CD8-positive, alpha-beta T cell (primary cell): ENCODE measurements at regions of chr1 and their contacts with region 1.

Region 1: GRCh38 chr1:174775614-174776013 is 224.1 kb upstream of the CACYBP start:
- DNase-seq: no peak
- ATAC-seq: no peak
- H3K4me3 ChIP-seq: no peak overlapping the region
- H3K4me3 Mint-ChIP-seq: no peak overlapping the region
- H3K27ac ChIP-seq: no peak overlapping the region
- H3K27ac Mint-ChIP-seq: no peak overlapping the region
- H3K4me1 ChIP-seq: no peaks in the 10 kb centered on the region
- H3K4me1 Mint-ChIP-seq: peaks cover 8% of the 10 kb centered on the region
- H3K27me3 ChIP-seq: no peaks in the 10 kb centered on the region
- H3K27me3 Mint-ChIP-seq: no peaks in the 10 kb centered on the region
- CTCF ChIP-seq: no peak

Region 2: DNA sequence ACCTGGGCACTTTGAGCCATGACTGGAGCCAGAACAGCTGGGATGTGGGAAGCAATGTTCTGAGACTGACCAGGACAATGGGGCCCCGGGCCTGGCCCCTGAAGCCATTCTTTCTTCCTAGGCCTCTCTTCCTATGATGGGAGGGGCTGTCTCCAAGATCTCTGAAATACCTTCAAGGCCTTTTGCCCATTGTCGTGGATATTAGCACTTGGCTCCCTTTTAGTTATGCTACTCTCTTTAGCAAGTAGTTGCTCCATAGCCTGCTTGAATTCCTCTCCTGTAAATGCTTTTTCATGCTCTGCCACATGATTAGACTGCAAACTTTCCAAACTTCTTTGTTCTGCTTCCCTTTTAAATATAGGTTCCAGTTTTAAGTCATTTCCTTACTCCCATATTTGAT is 38.8 kb before region 1 on chr1:
- CTCF ChIA-PET with region 1: no interaction called
- POLR2A ChIA-PET with region 1: no interaction called
- intact Hi-C with region 1: no loop called
- DNase-seq: no peak
- ATAC-seq: no peak
- H3K4me3 ChIP-seq: no peak overlapping the region
- H3K4me3 Mint-ChIP-seq: no peak overlapping the region
- H3K27ac ChIP-seq: no peak overlapping the region
- H3K27ac Mint-ChIP-seq: no peak overlapping the region
- H3K4me1 ChIP-seq: no peaks in the 10 kb centered on the region
- H3K4me1 Mint-ChIP-seq: peaks cover 6% of the 10 kb centered on the region
- H3K27me3 ChIP-seq: no peaks in the 10 kb centered on the region
- H3K27me3 Mint-ChIP-seq: no peaks in the 10 kb centered on the region
- CTCF ChIP-seq: no peak

Region 3: DNA sequence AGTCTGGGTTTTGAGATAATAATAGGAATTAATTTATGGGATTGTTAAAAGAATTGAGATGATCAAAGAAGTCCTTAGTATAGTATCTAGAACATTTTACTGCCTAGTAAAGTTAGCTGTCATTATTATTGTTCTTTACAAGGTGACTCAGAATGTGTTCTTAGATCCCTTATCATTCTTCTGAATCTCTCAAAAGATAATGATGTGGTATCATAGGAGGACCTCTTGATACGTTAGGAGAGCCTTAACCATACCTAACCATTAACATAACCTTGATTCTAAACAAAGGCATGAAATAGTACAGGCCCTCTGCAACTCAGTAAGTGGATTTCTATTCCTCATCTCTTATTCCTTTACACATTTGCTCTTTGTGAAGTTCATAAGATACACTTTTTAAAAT is 22.5 kb before region 1 on chr1:
- CTCF ChIA-PET with region 1: no interaction called
- POLR2A ChIA-PET with region 1: no interaction called
- intact Hi-C with region 1: no loop called
- DNase-seq: no peak
- ATAC-seq: no peak
- H3K4me3 ChIP-seq: no peak overlapping the region
- H3K4me3 Mint-ChIP-seq: no peak overlapping the region
- H3K27ac ChIP-seq: no peak overlapping the region
- H3K27ac Mint-ChIP-seq: no peak overlapping the region
- H3K4me1 ChIP-seq: no peaks in the 10 kb centered on the region
- H3K4me1 Mint-ChIP-seq: no peaks in the 10 kb centered on the region
- H3K27me3 ChIP-seq: no peaks in the 10 kb centered on the region
- H3K27me3 Mint-ChIP-seq: no peaks in the 10 kb centered on the region
- CTCF ChIP-seq: no peak

Region 4: DNA sequence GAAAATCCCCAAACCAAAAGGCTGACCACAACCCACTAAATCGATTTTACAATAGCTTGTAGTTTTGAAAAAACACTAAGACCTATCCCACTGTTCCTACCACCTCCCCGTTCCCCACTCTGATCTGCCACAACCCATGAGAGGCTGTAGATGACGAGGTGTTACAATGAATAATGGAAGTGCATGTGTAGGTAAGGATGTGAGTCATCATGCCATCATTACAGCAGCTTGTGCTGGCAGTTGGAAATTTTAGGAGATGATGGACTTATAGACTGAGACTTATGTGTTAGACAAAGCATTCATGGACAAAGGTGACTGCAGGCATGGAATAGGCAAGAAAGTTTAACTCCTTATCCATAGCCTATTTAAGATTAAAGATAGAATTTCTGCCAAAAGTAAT is 39.4 kb after region 1 on chr1:
- CTCF ChIA-PET with region 1: no interaction called
- POLR2A ChIA-PET with region 1: no interaction called
- intact Hi-C with region 1: no loop called
- DNase-seq: peak in 1 of 9 experiments; percentile 16
- ATAC-seq: no peak
- H3K4me3 ChIP-seq: no peak overlapping the region
- H3K4me3 Mint-ChIP-seq: no peak overlapping the region
- H3K27ac ChIP-seq: no peak overlapping the region
- H3K27ac Mint-ChIP-seq: no peak overlapping the region
- H3K4me1 ChIP-seq: no peaks in the 10 kb centered on the region
- H3K4me1 Mint-ChIP-seq: peaks cover 4% of the 10 kb centered on the region
- H3K27me3 ChIP-seq: no peaks in the 10 kb centered on the region
- H3K27me3 Mint-ChIP-seq: no peaks in the 10 kb centered on the region
- CTCF ChIP-seq: no peak

Region 5: DNA sequence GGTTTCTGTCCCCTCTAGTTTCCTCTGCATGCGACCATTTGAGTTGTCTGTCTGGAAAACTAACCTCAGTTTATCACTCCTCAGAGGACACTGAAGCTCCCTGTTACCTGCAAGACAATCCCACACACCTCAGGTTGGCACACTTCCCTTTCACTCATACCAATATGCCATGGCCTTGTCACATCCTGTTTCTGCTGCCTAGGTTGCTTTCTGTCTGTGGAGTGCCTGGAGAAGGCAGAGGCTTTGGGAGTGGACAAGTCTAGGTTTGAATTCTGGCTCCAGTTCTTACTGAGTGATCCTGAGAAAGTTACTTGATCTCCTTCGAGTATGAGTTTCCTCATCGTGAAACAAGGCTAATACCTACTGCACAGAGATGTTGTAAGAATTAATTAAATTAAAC is 52.6 kb after region 1 on chr1:
- CTCF ChIA-PET with region 1: no interaction called
- POLR2A ChIA-PET with region 1: no interaction called
- intact Hi-C with region 1: loop called in 1 of 2 experiments (anchors 5 kb)
- DNase-seq: no peak
- ATAC-seq: no peak
- H3K4me3 ChIP-seq: no peak overlapping the region
- H3K4me3 Mint-ChIP-seq: no peak overlapping the region
- H3K27ac ChIP-seq: no peak overlapping the region
- H3K27ac Mint-ChIP-seq: no peak overlapping the region
- H3K4me1 ChIP-seq: no peaks in the 10 kb centered on the region
- H3K4me1 Mint-ChIP-seq: peaks cover 8% of the 10 kb centered on the region
- H3K27me3 ChIP-seq: no peaks in the 10 kb centered on the region
- H3K27me3 Mint-ChIP-seq: no peaks in the 10 kb centered on the region
- CTCF ChIP-seq: no peak